Esophagus muscularis mucosa (tissue), 4 donors: ENCODE measurements at regions of chr18 and their contacts with region 1.

Region 1: GRCh38 chr18:8704361-8705279 is 736 bp upstream of the MTCL1 start:
- DNase-seq: peak; percentile 95
- H3K4me3 ChIP-seq: peak overlapping the region; percentile 67 to 89 (median 76)
- H3K27ac ChIP-seq: peak overlapping the region; percentile 93 to 96 (median 94)
- H3K4me1 ChIP-seq: peaks cover 22 to 60% (median 54%) of the 10 kb centered on the region in 4 donors
- H3K27me3 ChIP-seq: no peaks in the 10 kb centered on the region
- CTCF ChIP-seq: no peak
- EP300 ChIP-seq: no peak
- POLR2A ChIP-seq: peak; percentile 77

Region 2: DNA sequence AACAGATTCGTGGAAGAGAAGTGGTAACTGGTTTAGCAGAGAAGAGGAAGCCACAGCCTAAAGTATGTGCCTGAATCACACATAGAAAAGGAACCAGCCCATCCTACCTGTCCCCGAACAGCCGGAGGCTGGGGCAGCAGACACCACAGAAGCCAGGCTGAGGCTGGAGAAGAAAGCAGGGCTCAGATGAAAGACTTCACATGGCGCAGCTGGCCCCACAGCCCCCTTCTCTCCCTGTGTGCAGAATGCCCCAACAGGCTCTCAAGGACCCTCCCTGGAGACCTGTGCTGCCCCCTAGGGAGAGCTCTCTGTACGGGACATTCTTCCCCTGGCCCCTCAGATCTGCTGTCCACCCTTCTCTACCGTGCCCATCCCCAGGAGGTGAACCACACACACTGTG is 178.9 kb before region 1 on chr18:
- intact Hi-C with region 1: no loop called
- DNase-seq: no peak
- H3K4me3 ChIP-seq: no peak overlapping the region
- H3K27ac ChIP-seq: no peak overlapping the region
- H3K4me1 ChIP-seq: no peaks in the 10 kb centered on the region
- H3K27me3 ChIP-seq: peaks cover 0 to 14% (median 0%) of the 10 kb centered on the region in 4 donors
- CTCF ChIP-seq: no peak
- EP300 ChIP-seq: no peak
- POLR2A ChIP-seq: no peak

Region 3: DNA sequence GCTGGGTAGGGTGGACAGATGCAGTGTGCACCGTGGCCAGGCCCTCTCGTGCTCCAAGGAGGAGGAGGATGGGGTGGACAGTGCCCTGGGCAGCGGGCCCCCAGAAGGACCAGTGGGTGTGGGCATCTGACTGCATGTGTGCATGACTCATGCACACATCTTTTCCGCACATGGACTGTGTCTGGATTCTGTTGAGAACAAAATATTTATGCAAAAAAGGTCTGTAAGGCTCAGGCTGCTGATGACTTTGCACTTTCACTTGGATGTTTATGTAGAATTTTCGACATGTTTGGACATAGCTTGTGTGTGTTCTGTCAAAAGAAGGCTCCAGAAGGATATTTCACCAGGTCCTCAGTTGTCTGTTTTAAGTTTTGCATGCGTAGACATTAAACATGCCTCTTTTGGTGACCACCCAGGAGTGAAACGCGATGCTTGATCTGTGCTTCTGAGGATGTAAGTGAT is 46.4 kb after region 1 on chr18:
- intact Hi-C with region 1: loop called (anchors 2 kb)
- DNase-seq: peak; percentile 91
- H3K4me3 ChIP-seq: peak overlapping the region in 3 of 4 donors; percentile 17 to 37 (median 24)
- H3K27ac ChIP-seq: peak overlapping the region; percentile 62 to 84 (median 78)
- H3K4me1 ChIP-seq: peaks cover 0 to 71% (median 54%) of the 10 kb centered on the region in 4 donors
- H3K27me3 ChIP-seq: no peaks in the 10 kb centered on the region
- CTCF ChIP-seq: no peak
- EP300 ChIP-seq: peak; percentile 45
- POLR2A ChIP-seq: no peak

Region 4: DNA sequence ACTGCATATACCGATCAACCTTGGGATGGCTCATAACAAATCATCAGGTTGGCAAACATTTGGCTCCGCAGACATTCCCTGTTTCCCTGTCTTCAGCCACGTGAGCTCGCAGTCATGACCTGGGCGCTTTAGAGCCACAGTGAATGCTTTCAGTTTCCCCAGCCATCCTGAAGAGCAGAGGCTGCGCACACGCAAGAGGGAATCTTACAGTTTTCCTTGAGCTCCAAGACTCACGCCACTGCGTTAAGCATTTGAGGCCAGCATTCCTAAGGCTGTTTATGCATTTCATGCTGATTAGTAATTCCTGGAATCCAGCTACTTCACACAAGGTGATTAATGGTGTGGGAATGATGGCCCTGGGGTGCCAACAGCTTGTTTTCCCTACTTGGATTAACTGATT is 95.8 kb after region 1 on chr18:
- intact Hi-C with region 1: loop called (anchors 5 kb)
- DNase-seq: no peak
- H3K4me3 ChIP-seq: peak overlapping the region; percentile 17 to 42 (median 28)
- H3K27ac ChIP-seq: peak overlapping the region; percentile 84 to 93 (median 89)
- H3K4me1 ChIP-seq: peaks cover 6 to 65% (median 54%) of the 10 kb centered on the region in 4 donors
- H3K27me3 ChIP-seq: no peaks in the 10 kb centered on the region
- CTCF ChIP-seq: no peak
- EP300 ChIP-seq: peak; percentile 59
- POLR2A ChIP-seq: no peak

Region 5: DNA sequence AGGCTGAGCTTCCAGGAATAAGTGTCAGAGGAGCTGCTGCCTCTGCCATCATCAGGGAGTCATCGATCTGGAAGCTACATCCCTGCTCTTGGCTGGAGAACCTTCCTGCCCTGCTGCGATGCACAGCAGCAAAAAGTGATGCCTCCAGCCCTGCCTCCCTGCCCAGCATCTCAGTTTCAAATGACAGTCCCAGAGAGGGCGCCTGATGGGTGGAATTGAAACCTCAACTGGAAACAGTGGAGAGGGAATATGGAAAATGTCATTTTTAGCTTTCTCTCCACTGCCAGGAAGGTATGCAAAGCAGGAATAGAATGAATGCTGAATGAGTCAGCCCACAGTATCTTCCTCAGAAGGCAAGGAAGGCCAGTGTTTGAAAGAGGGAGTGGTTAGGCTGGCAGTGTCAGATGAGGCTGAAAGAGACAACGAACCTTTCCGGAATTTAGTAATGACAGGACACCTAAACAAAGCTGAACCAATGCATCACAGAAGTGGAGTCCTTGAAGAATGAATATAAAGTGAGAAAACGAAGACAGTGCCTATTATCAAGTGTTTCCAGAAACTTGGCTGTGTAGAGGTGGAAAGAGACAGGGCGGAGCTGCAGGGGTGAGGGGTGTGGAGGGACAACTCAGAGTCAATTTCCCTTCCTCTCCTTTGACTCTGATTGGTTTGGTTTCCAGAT is 244.0 kb after region 1 on chr18:
- intact Hi-C with region 1: loop called (anchors 5 kb)
- DNase-seq: no peak
- H3K4me3 ChIP-seq: peak overlapping the region; percentile 27 to 39 (median 36)
- H3K27ac ChIP-seq: peak overlapping the region; percentile 74 to 89 (median 86)
- H3K4me1 ChIP-seq: peaks cover 3 to 34% (median 30%) of the 10 kb centered on the region in 4 donors
- H3K27me3 ChIP-seq: no peaks in the 10 kb centered on the region
- CTCF ChIP-seq: no peak
- EP300 ChIP-seq: no peak
- POLR2A ChIP-seq: no peak